Panc1 (cell line): ENCODE measurements at regions of chr10 and their contacts with region 1.

Region 1: GRCh38 chr10:132886211-132887099 is 55.9 kb downstream of the CFAP46 start:
- DNase-seq: no peak
- ATAC-seq: peak; percentile 87
- H3K4me3 ChIP-seq: no peak overlapping the region
- H3K27ac ChIP-seq: no peak overlapping the region
- H3K4me1 ChIP-seq: no peaks in the 10 kb centered on the region
- H3K27me3 ChIP-seq: peaks cover 10% of the 10 kb centered on the region
- CTCF ChIP-seq: peak; percentile 35

Region 2: GRCh38 chr10:132663666-132664365 is 222.6 kb before region 1 on chr10:
- CTCF ChIA-PET with region 1: no interaction called
- POLR2A ChIA-PET with region 1: no interaction called
- in situ Hi-C with region 1: no loop called
- intact Hi-C with region 1: no loop called
- DNase-seq: no peak
- ATAC-seq: no peak
- H3K4me3 ChIP-seq: no peak overlapping the region
- H3K27ac ChIP-seq: peak overlapping the region; percentile 55
- H3K4me1 ChIP-seq: peaks cover 54% of the 10 kb centered on the region
- H3K27me3 ChIP-seq: no peaks in the 10 kb centered on the region
- CTCF ChIP-seq: no peak

Region 3: GRCh38 chr10:132684164-132684891 is 202.1 kb before region 1 on chr10:
- CTCF ChIA-PET with region 1: no interaction called
- POLR2A ChIA-PET with region 1: no interaction called
- in situ Hi-C with region 1: no loop called
- intact Hi-C with region 1: no loop called
- DNase-seq: peak; percentile 67
- ATAC-seq: peak; percentile 23; the same call in 1 of the 2 replicates
- H3K4me3 ChIP-seq: peak overlapping the region in 1 of 2 experiments; percentile 53; a peak in 2 of 4 replicates
- H3K27ac ChIP-seq: peak overlapping the region; percentile 89
- H3K4me1 ChIP-seq: peaks cover 40% of the 10 kb centered on the region
- H3K27me3 ChIP-seq: no peaks in the 10 kb centered on the region
- CTCF ChIP-seq: no peak

Region 4: GRCh38 chr10:132836832-132837540 is 49.5 kb before region 1 on chr10:
- CTCF ChIA-PET with region 1: interaction called, 5 read pairs
- POLR2A ChIA-PET with region 1: no interaction called
- in situ Hi-C with region 1: no loop called
- intact Hi-C with region 1: loop called (anchors 2 kb)
- DNase-seq: peak; percentile 12
- ATAC-seq: peak; percentile 65
- H3K4me3 ChIP-seq: peak overlapping the region; percentile 3 to 29; a peak in 3 of 4 replicates
- H3K27ac ChIP-seq: no peak overlapping the region
- H3K4me1 ChIP-seq: peaks cover 5% of the 10 kb centered on the region
- H3K27me3 ChIP-seq: peaks cover 15% of the 10 kb centered on the region
- CTCF ChIP-seq: peak; percentile 99

Region 5: DNA sequence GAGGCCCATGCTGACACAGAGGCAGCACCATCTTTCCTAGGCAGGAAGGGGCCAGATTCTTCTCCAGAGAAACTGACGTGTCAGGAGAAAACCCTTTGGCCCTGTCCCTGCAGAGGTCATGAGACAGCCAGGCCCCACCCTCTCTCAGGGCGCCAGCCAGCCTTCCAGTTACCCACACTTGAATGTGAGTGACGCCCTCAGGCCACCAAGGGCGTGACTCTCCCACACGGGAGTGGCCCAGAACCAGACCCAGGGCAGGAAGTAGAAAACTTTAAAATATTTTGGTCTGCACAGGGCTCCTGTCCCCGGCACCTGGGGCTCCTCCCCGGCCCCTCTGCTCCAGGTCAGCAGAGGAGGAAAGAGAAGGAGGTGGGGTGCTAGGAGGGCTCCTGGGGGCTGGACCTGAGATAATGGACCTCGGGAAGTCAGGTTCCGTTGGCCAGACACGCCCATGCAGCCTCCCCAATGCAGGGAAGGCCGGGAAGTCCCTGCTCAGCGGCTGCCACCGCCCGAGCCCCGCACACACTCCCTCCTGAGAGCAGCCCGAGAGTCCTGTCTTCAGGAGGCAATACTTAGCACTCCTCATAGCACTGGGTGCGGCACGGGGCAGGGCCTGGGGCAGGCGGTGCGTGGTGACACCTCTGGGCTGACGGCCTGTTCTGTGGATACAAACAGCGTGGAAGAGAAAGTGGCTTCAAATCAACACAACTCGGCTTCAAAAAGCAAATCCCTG is 122.9 kb after region 1 on chr10:
- CTCF ChIA-PET with region 1: no interaction called
- POLR2A ChIA-PET with region 1: no interaction called
- in situ Hi-C with region 1: no loop called
- intact Hi-C with region 1: no loop called
- DNase-seq: no peak
- ATAC-seq: peak; percentile 88
- H3K4me3 ChIP-seq: peak overlapping the region; percentile 12 to 16
- H3K27ac ChIP-seq: peak overlapping the region; percentile 59
- H3K4me1 ChIP-seq: peaks cover 13% of the 10 kb centered on the region
- H3K27me3 ChIP-seq: no peaks in the 10 kb centered on the region
- CTCF ChIP-seq: no peak